ENCODE measurements at regions of chr2 and their contacts with region 1.

Region 1: DNA sequence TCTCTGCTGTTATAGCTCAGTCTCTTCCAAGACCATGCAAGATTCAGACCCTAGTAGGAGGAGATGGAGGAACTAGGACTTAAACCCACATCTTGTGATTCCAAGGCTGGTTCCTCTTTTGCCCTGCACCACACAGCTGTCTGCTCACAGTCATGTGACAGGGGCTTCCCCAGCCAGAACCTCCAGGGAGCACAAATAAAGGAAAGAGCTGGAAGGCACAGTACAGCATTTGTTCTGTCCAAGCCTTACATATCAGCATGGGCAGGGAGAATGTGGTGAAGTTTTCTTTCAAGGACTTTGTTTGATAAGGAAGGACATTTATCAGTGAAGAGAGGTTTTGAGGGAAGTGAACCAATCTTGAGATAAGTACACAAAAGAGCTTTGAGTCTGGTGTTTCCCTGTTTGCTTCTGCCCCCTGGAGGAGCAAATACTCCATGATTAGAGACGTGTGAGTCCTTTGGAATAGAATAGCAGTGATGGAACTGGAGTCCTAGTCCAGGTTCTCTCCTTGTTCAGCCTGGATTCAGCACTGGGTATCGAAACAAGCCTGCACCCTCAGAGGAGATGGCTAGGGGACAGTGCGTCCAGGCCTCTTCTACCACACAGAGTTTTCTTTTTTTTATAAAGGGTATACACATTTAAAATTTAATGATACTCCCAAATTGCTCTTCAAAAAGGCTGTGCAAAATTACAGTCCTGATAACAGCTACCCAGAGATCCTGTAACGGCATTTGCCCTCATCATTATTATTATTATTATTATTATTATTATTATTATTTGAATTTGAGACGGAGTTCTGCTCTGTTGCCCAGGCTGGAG is 24.6 kb upstream of the CASP10 start:
- DNase-seq: peak; percentile 93 to 99 (median 97)
- H3K4me3 ChIP-seq: peak overlapping the region in 1 of 3 experiments; percentile 28
- H3K4me3 Mint-ChIP-seq: peak overlapping the region in 1 of 2 donors; percentile 72
- H3K27ac ChIP-seq: peak overlapping the region; percentile 91 to 95
- H3K27ac Mint-ChIP-seq: peak overlapping the region; percentile 98 to 99 (median 98)
- H3K4me1 ChIP-seq: peaks cover 47 to 53% of the 10 kb centered on the region in 2 donors
- H3K4me1 Mint-ChIP-seq: peaks cover 48% of the 10 kb centered on the region
- H3K27me3 ChIP-seq: no peaks in the 10 kb centered on the region
- H3K27me3 Mint-ChIP-seq: no peaks in the 10 kb centered on the region
- CTCF ChIP-seq: peak; percentile 87

Region 2: DNA sequence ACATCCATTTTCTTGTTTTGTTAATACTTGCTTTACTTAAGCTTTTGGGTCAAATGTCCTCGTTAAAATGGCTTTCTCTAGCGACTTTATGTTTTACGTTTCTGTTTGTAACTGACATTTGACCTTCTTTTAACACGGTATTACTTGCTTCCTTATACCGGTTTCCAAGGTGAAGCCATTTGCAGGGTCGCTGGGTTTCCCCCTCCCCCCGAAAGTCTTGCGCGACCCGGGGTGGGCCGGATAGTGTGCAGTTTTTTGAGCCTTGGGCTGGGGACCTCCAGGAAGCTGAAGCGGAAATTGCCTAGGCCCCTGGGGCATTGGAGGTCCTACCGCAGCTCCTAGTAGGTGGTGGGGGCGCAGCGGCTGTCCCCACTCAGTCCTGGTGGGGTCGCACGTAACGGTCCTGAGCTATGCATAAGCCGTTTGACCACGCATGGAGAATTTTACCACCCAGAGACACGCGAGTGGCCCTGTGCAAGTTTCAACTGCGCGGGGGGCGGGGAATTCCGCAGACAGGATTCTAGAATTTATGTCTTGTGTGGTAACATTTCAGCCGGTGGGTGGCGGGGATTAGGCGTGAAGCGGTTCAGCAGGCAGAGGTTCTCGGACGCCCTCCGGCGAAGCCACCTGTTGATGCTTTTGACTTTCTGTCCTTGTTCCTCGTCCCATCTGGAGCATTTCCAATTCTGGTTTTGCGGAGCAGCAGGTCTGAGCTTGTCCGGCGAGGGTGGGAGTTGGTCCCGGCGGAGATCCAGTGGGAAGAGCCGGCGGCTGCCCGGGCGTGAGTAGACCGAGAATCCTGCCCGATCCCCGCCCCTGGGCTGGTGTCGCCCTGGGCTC is 40.0 kb before region 1 on chr2:
- intact Hi-C with region 1: loop called (anchors 2 to 5 kb)
- DNase-seq: peak; percentile 67 to 88 (median 68)
- H3K4me3 ChIP-seq: peak overlapping the region; percentile 77 to 99 (median 83)
- H3K4me3 Mint-ChIP-seq: peak overlapping the region; percentile 97 to 99
- H3K27ac ChIP-seq: peak overlapping the region; percentile 96 to 99
- H3K27ac Mint-ChIP-seq: peak overlapping the region; percentile 93 to 99 (median 99)
- H3K4me1 ChIP-seq: peaks cover 40 to 63% of the 10 kb centered on the region in 2 donors
- H3K4me1 Mint-ChIP-seq: peaks cover 43% of the 10 kb centered on the region
- H3K27me3 ChIP-seq: no peaks in the 10 kb centered on the region
- H3K27me3 Mint-ChIP-seq: peaks cover 0 to 4% (median 1%) of the 10 kb centered on the region in 3 donors
- CTCF ChIP-seq: peak; percentile 35

Region 3: GRCh38 chr2:201231781-201232466 is 73.6 kb after region 1 on chr2:
- intact Hi-C with region 1: no loop called
- DNase-seq: peak; percentile 91 to 97 (median 95)
- H3K4me3 ChIP-seq: peak overlapping the region in 1 of 3 experiments; percentile 45
- H3K4me3 Mint-ChIP-seq: no peak overlapping the region
- H3K27ac ChIP-seq: peak overlapping the region; percentile 45 to 76
- H3K27ac Mint-ChIP-seq: peak overlapping the region; percentile 72 to 94 (median 88)
- H3K4me1 ChIP-seq: peaks cover 50 to 61% of the 10 kb centered on the region in 2 donors
- H3K4me1 Mint-ChIP-seq: peaks cover 56% of the 10 kb centered on the region
- H3K27me3 ChIP-seq: no peaks in the 10 kb centered on the region
- H3K27me3 Mint-ChIP-seq: peaks cover 0 to 2% (median 0%) of the 10 kb centered on the region in 3 donors
- CTCF ChIP-seq: peak; percentile 87

Measured in CD14-positive monocyte (primary cell).